ENCODE measurements at regions of chr2 and their contacts with region 1.

Region 1: GRCh38 chr2:197113275-197113711 is 186.8 kb upstream of the PGAP1 start:
- DNase-seq: peak; percentile 68
- H3K4me3 ChIP-seq: no peak overlapping the region
- H3K27ac ChIP-seq: no peak overlapping the region
- H3K4me1 ChIP-seq: peaks cover 13% of the 10 kb centered on the region
- H3K27me3 ChIP-seq: no peaks in the 10 kb centered on the region

Region 2: GRCh38 chr2:197383823-197384222 is 270.5 kb after region 1 on chr2:
- in situ Hi-C with region 1: loop called (anchors 5 kb)
- DNase-seq: no peak
- H3K4me3 ChIP-seq: no peak overlapping the region
- H3K27ac ChIP-seq: no peak overlapping the region
- H3K4me1 ChIP-seq: peaks cover 10% of the 10 kb centered on the region
- H3K27me3 ChIP-seq: no peaks in the 10 kb centered on the region